Tibial artery (tissue), 4 donors: ENCODE measurements at regions of chr12 and their contacts with region 1.

Region 1: DNA sequence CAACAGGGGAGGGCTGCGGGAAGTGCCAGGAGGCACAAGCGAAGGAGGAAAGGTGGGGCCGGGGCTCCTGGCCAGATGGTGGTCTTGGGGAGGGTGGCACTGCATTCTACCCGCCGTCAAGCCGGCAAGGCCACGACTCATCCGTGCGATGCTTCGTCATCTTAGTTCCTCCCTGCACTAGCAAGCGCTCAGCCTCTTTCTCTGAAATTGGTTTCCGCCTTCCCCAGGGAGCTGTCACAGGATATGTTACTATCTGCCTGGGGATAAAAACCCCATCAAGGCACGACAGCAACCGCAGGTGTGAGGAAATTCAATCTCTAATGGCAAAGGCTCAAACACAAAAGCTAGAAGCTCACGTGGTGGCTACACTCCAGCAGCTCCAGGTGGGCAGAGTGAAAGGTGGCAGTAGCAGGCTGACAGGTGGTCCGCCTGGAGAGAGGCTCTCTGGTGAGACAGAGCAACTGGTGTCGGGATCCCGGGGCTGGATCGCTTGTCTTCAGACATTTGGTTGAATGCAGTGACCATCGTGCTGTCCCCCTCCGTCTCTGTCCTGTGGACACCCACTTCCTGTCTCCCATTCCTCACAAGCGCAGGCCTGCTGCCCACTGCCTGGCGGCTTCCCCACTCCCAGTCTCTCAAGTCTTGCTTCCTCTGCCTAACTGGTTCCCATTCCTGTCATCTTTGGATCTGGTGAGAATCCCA is 34.2 kb downstream of the ACADS start:
- DNase-seq: no peak
- H3K4me3 ChIP-seq: no peak overlapping the region
- H3K27ac ChIP-seq: no peak overlapping the region
- H3K4me1 ChIP-seq: peaks cover 0 to 19% (median 9%) of the 10 kb centered on the region in 4 donors
- H3K27me3 ChIP-seq: no peaks in the 10 kb centered on the region
- CTCF ChIP-seq: no peak

Region 2: DNA sequence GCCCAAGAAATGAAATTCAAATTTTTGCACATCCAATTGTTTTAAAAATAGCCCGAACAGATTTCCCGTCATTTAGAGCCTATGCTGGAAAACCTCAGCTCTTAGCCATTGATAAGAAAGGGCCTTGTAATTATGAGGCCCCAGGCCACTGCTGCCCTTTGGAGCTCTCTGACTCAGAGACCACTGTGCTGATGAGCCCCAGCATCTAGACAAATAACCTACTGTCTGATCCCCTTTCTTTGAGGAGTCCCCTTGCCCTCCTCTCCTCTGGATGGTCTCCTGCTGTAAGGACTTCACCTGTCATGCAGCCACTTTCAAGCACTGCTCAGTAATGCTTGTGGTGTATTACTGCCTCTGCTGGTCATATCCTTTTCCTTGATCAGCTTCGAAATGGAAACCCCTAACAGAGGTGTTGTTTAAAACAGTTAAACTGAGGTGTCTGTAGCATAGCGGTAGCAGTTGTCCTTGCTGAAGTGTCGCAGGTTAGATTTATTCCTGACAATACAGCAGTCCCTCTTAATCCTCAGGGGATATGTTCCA is 1938.4 kb before region 1 on chr12:
- intact Hi-C with region 1: no loop called
- DNase-seq: no peak
- H3K4me3 ChIP-seq: no peak overlapping the region
- H3K27ac ChIP-seq: no peak overlapping the region
- H3K4me1 ChIP-seq: no peaks in the 10 kb centered on the region
- H3K27me3 ChIP-seq: no peaks in the 10 kb centered on the region
- CTCF ChIP-seq: no peak

Region 3: DNA sequence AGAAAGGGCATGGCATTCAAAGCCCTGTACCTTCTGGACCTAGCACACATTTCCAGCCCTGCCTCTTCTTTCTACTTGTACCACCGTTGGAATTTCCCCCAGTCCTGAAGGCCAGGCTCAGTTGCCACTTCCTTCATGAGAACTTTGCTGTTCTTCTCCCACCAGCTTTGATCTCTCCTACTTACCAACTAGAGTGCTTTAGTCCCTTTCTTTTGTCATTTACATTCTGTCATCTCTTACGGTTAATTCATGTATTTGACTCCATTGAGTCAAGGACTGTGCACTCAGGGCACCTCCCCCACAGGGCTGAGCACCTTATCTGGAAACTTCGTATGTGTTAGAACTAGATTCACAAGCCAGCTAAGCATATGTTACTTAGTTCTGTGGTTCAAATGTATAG is 744.5 kb before region 1 on chr12:
- intact Hi-C with region 1: no loop called
- DNase-seq: no peak
- H3K4me3 ChIP-seq: no peak overlapping the region
- H3K27ac ChIP-seq: no peak overlapping the region
- H3K4me1 ChIP-seq: no peaks in the 10 kb centered on the region
- H3K27me3 ChIP-seq: peaks cover 0 to 4% of the 10 kb centered on the region in 2 donors
- CTCF ChIP-seq: no peak

Region 4: DNA sequence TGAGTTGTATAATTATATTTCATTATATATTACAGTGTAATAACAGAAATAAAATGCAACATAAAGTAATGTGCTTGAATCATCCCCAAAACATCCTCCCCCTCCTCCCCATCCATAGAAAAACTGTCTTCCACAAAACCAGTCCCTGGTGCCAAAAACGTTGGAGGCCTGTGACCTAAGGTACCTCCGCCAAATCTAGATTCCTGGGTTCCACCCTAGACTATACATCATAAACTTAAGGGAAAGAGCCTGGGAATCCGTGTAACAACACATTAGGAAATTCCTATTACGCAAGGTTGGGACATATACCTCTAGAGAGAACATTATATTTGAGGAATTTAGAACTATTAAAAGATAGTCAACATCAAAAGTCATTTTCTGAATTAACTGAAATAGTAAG is 106.2 kb after region 1 on chr12:
- intact Hi-C with region 1: no loop called
- DNase-seq: no peak
- H3K4me3 ChIP-seq: no peak overlapping the region
- H3K27ac ChIP-seq: no peak overlapping the region
- H3K4me1 ChIP-seq: peaks cover 0 to 29% (median 8%) of the 10 kb centered on the region in 4 donors
- H3K27me3 ChIP-seq: no peaks in the 10 kb centered on the region
- CTCF ChIP-seq: no peak

Region 5: GRCh38 chr12:122087431-122088178 is 1327.7 kb after region 1 on chr12:
- intact Hi-C with region 1: loop called (anchors 5 kb)
- DNase-seq: peak in 1 of 2 donors; percentile 54
- H3K4me3 ChIP-seq: no peak overlapping the region
- H3K27ac ChIP-seq: peak overlapping the region; percentile 72 to 79
- H3K4me1 ChIP-seq: peaks cover 6 to 79% (median 66%) of the 10 kb centered on the region in 4 donors
- H3K27me3 ChIP-seq: no peaks in the 10 kb centered on the region
- CTCF ChIP-seq: no peak